ENCODE measurements at regions of chr14 and their contacts with region 1.

Region 1: DNA sequence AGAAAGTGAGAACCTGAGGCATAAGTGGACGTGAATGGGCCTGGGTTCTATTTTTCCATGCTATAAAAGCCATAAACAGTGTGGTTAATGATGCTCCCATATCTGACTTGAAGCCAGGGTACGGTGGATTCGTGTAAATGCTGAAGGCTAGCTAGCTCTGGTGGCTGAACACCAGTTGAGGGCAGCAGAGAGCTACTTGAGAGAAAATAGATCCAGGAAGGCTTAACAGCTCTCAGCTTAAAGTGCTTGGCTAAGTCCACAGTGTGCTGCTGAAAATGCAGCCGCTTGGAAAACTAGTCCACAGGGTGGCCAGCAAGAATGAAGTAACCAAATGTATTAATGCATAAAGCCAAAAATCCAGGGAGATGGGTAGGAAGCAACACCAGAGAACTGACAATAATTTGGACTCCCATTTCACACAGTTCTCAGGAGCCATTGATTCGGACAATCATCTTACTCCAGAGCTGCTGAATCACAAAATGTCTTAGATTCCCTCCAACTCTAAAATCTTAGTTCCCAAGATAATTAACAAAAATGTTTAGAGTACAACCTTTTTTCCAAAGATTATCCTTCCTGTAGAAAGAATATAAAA is 15.0 kb upstream of the FOXG1 start:
- DNase-seq: peak; percentile 20
- H3K4me3 Mint-ChIP-seq: no peak overlapping the region
- H3K27ac Mint-ChIP-seq: no peak overlapping the region
- H3K4me1 Mint-ChIP-seq: no peaks in the 10 kb centered on the region
- H3K27me3 Mint-ChIP-seq: peaks cover 27% of the 10 kb centered on the region

Region 2: DNA sequence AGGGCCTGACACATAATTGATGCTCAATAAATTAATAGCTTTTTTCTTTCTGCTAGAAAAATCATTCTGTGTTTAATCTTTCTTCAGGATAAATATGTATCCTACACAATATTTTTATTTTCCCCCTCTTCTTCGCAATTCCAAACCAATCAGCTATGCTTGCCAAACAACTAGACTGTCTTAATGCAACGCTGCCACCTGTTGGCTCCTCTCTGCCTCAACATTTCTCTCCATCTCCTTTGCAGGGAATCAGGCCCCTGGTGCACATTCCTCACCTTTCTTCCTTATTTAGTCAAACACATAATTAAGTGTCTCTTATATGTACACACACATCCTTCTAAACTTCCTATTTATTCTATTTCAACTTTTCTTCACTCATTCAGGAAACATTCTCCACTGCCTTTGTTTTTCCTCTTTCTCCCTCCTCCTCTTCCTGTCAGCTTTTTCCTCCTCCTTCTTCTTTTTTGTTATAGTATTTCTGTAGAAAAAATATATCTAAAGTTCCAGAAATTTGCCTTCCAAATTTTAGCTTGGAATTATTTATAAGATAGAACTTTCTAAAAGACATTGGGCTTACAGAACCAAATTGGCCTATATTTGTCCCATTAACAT is 770.1 kb after region 1 on chr14:
- CTCF ChIA-PET with region 1: no interaction called
- POLR2A ChIA-PET with region 1: no interaction called
- intact Hi-C with region 1: loop called (anchors 5 kb)
- DNase-seq: no peak
- H3K4me3 Mint-ChIP-seq: no peak overlapping the region
- H3K27ac Mint-ChIP-seq: no peak overlapping the region
- H3K4me1 Mint-ChIP-seq: no peaks in the 10 kb centered on the region
- H3K27me3 Mint-ChIP-seq: no peaks in the 10 kb centered on the region

Region 3: DNA sequence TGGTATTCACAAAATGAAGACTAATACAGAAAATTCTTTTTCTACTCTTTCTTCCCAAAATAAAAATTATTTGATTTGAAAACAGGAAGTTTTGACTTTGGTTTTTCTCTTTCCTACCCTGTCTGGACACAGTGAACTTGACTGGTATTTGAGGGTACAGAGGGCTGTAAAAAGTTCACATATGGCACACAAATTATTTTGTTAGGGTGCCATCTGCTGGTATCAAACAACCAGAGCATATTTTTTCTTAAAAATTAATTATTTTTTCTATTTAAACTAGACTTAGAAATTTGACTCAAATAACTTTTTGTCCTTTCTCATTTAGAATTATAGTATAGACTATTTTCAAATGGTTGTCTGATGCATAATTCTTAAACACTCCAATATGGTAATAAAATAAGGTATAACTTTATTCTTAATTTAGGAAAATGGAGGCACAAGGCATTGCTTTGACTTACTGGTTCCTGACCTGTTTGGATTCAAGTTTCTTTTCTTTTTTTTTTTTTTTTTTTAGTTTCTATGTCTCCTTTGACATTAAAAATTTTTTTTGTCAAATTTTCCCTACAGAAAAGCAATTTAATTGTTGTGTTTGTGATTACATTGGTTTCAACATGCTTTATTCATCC is 785.4 kb after region 1 on chr14:
- CTCF ChIA-PET with region 1: no interaction called
- POLR2A ChIA-PET with region 1: no interaction called
- intact Hi-C with region 1: loop called (anchors 5 kb)
- DNase-seq: no peak
- H3K4me3 Mint-ChIP-seq: no peak overlapping the region
- H3K27ac Mint-ChIP-seq: no peak overlapping the region
- H3K4me1 Mint-ChIP-seq: no peaks in the 10 kb centered on the region
- H3K27me3 Mint-ChIP-seq: no peaks in the 10 kb centered on the region